HAP-1 (cell line): ENCODE measurements at regions of chr6 and their contacts with region 1.

Region 1: DNA sequence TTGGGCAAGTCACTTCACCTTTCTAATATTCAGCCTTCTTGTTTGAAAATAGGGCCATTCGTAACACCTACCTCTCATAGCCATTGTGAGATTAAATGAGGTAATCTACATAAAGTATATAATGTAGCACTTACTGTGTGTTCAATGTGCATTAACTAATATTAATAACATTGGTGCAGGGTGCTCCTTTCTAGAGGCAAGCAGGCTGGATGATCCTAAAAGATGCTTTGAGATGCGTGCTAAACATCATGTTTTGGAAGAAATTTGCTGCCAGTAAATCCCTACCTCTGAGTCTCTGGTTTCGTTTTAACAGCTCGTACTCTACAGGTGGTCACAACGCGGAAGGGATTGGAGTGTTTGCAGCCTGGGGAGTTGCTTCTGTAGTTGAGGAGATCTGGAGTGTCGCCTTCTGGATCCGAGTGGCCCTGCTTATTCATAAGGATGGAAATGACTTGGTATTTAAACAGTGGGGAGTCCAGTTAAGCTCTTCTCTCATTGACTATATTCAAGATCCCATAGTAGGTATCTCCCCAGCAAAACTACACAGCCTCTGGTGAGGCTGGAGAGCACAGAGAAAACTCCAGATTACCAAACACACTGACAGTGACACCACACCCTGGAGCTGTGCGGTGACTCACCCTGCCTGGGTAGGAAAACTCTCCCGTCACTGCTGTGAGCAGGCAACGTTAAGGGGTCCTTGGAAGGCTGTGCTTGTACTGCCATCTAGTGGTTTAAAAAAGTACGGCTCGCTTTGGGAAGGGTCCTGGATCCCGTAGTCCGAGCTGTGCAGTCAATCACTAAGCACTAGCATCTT is 107.9 kb downstream of the MAP3K7 start:
- DNase-seq: peak; percentile 77 to 87
- H3K4me3 ChIP-seq: no peak overlapping the region
- H3K4me1 ChIP-seq: no peaks in the 10 kb centered on the region
- H3K27me3 ChIP-seq: no peaks in the 10 kb centered on the region

Region 2: GRCh38 chr6:89934685-89935366 is 544.2 kb before region 1 on chr6:
- in situ Hi-C with region 1: loop called (anchors 5 kb)
- DNase-seq: no peak
- H3K4me3 ChIP-seq: no peak overlapping the region
- H3K4me1 ChIP-seq: no peaks in the 10 kb centered on the region
- H3K27me3 ChIP-seq: no peaks in the 10 kb centered on the region

Region 3: DNA sequence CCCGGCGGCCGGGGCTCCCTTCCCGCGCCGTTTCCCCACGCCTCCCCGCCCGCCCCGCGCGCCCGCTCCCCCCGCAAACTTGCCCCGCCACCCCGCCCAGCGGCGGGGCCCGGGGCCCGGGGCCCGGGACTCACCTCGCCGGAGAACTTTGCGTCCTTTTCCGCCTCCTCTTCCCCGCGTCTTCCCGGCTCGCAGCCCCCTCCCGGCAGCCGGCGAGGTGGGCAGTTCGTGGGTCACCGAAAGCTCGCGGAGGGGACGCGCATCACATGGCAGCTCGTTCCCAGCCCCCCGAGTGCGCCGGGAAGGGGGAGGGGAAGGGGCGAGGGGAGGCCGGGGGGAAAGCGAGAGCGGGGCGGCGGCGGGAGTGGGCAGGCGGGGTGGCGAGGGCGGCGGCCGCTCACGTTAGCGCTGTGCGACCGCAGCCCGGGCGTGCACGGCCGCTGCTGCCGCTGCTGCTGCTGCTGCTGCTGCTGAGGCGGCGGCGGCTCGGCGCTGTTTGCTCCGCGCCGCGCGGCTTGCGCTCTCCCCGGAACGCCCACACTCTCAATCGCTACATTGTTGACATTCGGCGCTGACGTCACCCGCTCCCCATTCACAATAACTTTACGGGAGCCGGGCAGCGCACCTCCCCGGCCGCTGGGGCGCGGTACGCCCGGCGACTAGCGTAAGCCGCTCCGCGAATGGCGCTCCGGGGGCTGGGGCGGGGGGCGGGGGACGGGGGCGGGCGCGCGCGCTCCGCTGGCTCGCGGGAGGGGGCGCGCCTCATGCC is 182.5 kb before region 1 on chr6 and contains the start of gene BACH2:
- in situ Hi-C with region 1: loop called (anchors 10 kb)
- DNase-seq: peak; percentile 82 to 93
- H3K4me3 ChIP-seq: peak within 1 kb of the TSS; percentile 44
- H3K4me1 ChIP-seq: peaks cover 4% of the 10 kb centered on the region; the same call in 1 of the 2 replicates
- H3K27me3 ChIP-seq: peaks cover 41% of the 10 kb centered on the region

Region 4: DNA sequence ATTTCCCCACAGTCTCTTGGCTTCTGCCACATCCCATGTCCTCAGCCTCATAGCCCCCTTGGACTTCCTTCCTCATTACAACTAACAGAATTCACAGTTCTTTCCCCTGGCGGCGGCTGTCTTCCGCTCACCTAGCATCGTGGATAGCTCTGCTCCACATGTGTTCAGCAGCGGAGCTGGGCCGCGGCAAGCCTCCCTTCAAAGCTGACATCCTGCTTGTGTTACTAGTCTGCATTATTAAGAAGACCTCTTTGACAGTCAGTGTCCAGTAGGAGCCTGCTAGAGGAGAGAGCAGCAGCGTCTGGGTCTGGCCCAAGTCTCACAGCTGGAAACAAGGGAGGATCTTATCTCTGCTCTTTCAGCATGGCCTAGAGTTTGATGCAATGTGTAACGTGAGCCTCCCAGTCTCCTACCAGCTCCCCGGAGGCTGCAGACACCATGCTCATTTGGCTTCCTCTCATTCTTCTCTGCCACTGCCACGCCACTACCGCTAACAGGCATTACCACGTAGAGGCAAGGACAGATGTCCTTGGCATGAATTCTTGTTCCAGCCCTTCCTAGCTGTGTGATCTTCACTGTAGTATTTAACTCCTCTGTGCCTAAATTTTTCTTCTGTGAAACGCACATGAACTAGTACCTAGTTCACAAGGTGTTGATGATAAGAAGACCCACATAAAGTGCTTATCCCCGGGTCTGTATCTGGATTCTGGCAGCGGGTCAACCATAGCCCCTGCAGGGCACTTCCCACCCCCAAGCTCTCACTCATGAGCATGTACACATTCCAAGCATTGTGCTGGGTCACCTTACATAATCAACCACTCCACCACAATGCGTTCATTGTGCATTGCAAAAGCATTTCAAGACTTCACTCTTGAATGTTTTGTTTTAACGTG is 75.3 kb before region 1 on chr6:
- in situ Hi-C with region 1: no loop called
- DNase-seq: peak in 1 of 2 experiments; percentile 33
- H3K4me3 ChIP-seq: no peak overlapping the region
- H3K4me1 ChIP-seq: no peaks in the 10 kb centered on the region
- H3K27me3 ChIP-seq: peaks cover 14% of the 10 kb centered on the region

Region 5: DNA sequence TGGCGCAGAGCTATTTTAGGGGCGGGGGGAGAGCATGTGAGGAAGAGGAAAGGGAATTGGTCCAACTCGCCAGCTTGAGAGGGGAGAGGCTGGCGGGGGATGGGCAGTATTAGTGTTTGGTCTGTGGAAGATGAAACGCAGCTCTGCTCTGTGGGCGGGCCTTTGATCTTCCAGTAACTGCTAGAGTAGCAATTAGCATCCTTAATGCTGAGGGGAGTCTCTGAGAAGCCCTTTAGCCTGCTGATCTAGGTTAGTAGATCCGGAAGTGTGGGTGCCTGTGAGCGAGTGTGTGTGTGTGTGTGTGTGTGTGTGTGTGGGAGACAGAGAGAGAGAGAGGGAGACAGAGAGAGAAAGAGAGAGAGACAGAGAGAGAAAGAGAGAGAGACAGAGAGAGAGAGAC is 65.1 kb before region 1 on chr6:
- in situ Hi-C with region 1: no loop called
- DNase-seq: no peak
- H3K4me3 ChIP-seq: no peak overlapping the region
- H3K4me1 ChIP-seq: no peaks in the 10 kb centered on the region
- H3K27me3 ChIP-seq: no peaks in the 10 kb centered on the region

Region 6: DNA sequence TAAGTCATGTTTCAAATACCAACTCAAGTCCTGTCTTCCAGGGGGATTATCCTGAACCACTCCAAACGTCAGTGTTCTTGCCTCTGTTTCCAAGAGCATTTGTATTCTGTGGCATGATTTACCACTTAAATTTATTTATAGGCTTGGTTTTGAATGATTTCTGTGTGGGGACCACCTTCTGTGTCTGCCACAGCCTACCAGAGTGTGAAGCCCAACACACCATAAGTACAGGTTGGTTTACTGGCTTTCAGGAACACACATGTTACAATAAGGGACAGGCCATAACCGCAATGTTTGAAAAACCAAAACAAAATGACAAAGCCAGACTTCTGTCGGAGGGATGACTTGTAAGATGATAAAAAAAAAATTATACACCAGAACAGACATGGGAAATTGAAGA is 164.4 kb after region 1 on chr6:
- in situ Hi-C with region 1: no loop called
- DNase-seq: peak; percentile 29 to 34
- H3K4me3 ChIP-seq: no peak overlapping the region
- H3K4me1 ChIP-seq: no peaks in the 10 kb centered on the region
- H3K27me3 ChIP-seq: no peaks in the 10 kb centered on the region; the same call in 1 of the 2 replicates